ENCODE measurements at regions of chr17 and their contacts with region 1.

Region 1: GRCh38 chr17:31508288-31509094 is 117.0 kb downstream of the RAB11FIP4 start:
- DNase-seq: peak; percentile 55 to 90 (median 86)
- H3K4me3 ChIP-seq: peak overlapping the region; percentile 73
- H3K4me3 Mint-ChIP-seq: peak overlapping the region; percentile 85 to 96 (median 90)
- H3K27ac ChIP-seq: peak overlapping the region; percentile 70
- H3K27ac Mint-ChIP-seq: peak overlapping the region; percentile 92 to 100 (median 98)
- H3K4me1 ChIP-seq: peaks cover 66% of the 10 kb centered on the region
- H3K4me1 Mint-ChIP-seq: peaks cover 61 to 84% (median 76%) of the 10 kb centered on the region in 3 donors
- H3K27me3 ChIP-seq: no peaks in the 10 kb centered on the region
- H3K27me3 Mint-ChIP-seq: no peaks in the 10 kb centered on the region

Region 2: DNA sequence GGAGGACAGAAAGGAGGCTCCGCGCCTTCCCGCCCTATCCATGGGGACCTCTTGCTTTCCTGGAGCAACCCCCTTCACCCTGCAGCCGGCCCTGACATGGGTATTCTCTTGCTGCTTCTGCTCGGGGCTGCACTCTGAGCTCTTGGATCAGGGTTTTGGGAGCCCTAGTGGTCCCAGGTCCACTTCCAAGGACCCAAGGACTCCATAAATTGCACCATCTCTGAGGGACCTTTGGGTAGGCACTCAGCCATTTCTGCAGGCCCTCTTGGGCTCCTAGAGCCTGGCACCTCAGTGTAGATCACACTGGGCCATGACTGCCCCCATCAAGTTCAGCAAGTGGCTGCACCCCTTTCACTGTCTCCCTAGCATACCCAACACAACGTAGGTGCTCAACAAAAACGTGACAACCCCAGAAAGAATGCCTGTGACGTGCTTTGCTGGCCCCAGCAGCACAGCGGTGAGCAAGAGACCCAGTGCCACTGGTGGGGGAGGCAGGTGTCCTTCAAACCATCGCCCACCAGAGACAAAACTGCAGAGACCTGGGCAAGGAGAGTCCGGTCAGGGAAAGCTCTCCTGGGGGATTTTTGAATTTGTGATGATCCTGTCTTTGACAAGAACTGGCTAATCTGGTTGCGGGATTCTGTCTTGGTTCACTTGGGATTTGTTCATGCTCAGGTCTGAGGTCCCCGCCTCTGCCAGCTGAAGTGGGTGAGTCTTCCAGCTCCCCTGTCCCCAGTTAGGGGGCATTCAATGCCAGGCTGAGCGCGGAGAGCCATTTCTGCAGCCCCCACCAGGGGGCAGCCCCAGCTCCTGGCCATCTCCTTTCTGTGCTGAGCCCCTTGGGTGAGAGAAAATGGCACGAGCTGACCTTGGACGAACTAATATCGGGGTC is 119.5 kb before region 1 on chr17:
- CTCF ChIA-PET with region 1: interaction called, 10 read pairs
- POLR2A ChIA-PET with region 1: no interaction called
- DNase-seq: peak in 4 of 5 donors; percentile 17 to 46 (median 24)
- H3K4me3 ChIP-seq: no peak overlapping the region
- H3K4me3 Mint-ChIP-seq: peak overlapping the region in 1 of 7 donors; percentile 28
- H3K27ac ChIP-seq: no peak overlapping the region
- H3K27ac Mint-ChIP-seq: no peak overlapping the region
- H3K4me1 ChIP-seq: no peaks in the 10 kb centered on the region
- H3K4me1 Mint-ChIP-seq: peaks cover 0 to 12% (median 9%) of the 10 kb centered on the region in 3 donors
- H3K27me3 ChIP-seq: peaks cover 24% of the 10 kb centered on the region
- H3K27me3 Mint-ChIP-seq: peaks cover 29 to 34% of the 10 kb centered on the region in 2 donors

Region 3: DNA sequence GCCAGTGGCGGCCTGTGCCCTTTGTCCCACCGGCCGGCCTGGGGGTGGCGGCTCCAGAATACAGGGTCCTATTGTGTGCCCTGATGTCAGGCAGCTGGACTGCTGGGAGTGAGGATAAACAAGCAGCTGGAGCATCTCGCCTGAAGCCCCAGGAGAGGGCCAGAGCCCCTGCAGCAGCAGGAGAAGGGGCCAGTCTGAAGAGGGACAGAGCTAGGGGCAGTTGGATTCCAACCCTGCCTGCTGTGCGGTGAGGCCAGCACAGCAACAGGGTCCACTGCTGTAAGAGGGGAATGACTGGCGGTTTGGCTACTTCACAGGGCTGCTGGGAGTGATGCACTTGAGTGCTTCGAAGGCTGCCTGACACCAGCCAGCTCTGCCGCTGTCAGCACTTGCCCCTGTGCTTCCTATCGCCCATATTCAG is 92.0 kb before region 1 on chr17:
- CTCF ChIA-PET with region 1: no interaction called
- POLR2A ChIA-PET with region 1: no interaction called
- DNase-seq: no peak
- H3K4me3 ChIP-seq: no peak overlapping the region
- H3K4me3 Mint-ChIP-seq: no peak overlapping the region
- H3K27ac ChIP-seq: no peak overlapping the region
- H3K27ac Mint-ChIP-seq: no peak overlapping the region
- H3K4me1 ChIP-seq: no peaks in the 10 kb centered on the region
- H3K4me1 Mint-ChIP-seq: no peaks in the 10 kb centered on the region
- H3K27me3 ChIP-seq: no peaks in the 10 kb centered on the region
- H3K27me3 Mint-ChIP-seq: peaks cover 0 to 7% of the 10 kb centered on the region in 2 donors

Region 4: DNA sequence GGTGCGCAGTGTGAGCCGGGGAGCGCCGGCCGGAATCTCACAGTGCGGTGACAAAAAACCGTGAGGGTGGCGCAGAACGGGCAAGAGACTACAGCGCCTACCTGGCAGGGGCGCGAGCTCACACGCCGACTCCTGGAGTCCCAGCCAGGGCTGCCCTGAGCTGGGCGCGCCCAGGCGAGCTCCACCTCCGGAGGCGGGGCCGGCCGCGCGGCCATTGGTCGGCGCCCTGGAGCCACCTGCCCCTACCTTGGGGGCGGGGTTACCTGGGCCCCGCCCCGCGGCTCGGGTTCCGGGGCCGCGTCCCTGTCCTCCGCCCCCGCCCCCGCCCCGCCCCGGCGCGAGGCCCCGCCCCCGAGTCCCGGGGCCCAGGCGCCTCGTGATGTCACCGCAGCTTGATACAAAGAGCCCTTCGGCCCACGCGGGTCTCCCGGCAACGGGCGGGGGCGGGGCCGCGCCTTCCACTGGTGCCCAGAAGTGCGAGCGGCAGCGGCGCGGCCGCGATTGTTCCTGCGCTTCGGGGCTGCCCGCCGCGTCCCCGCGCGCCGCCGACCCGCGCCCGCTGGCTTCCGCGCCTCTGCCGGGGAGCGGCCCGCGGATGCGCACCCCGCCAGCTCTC is 20.7 kb before region 1 on chr17:
- CTCF ChIA-PET with region 1: interaction called, 48 read pairs
- POLR2A ChIA-PET with region 1: interaction called, 51 read pairs
- DNase-seq: peak; percentile 93 to 98 (median 94)
- H3K4me3 ChIP-seq: peak overlapping the region; percentile 73
- H3K4me3 Mint-ChIP-seq: peak overlapping the region; percentile 87 to 93 (median 91)
- H3K27ac ChIP-seq: peak overlapping the region; percentile 80
- H3K27ac Mint-ChIP-seq: peak overlapping the region; percentile 72 to 99 (median 94)
- H3K4me1 ChIP-seq: peaks cover 46% of the 10 kb centered on the region
- H3K4me1 Mint-ChIP-seq: peaks cover 47 to 50% (median 49%) of the 10 kb centered on the region in 3 donors
- H3K27me3 ChIP-seq: no peaks in the 10 kb centered on the region
- H3K27me3 Mint-ChIP-seq: no peaks in the 10 kb centered on the region

Region 5: GRCh38 chr17:31494259-31495021 is 14.1 kb before region 1 on chr17:
- CTCF ChIA-PET with region 1: interaction called, 48 read pairs
- POLR2A ChIA-PET with region 1: interaction called, 39 read pairs
- DNase-seq: peak; percentile 46 to 83 (median 75)
- H3K4me3 ChIP-seq: peak overlapping the region; percentile 46
- H3K4me3 Mint-ChIP-seq: peak overlapping the region; percentile 54 to 91 (median 79)
- H3K27ac ChIP-seq: peak overlapping the region; percentile 46
- H3K27ac Mint-ChIP-seq: peak overlapping the region; percentile 87 to 99 (median 97)
- H3K4me1 ChIP-seq: peaks cover 87% of the 10 kb centered on the region
- H3K4me1 Mint-ChIP-seq: peaks cover 81 to 100% (median 87%) of the 10 kb centered on the region in 3 donors
- H3K27me3 ChIP-seq: no peaks in the 10 kb centered on the region
- H3K27me3 Mint-ChIP-seq: no peaks in the 10 kb centered on the region

Region 6: GRCh38 chr17:31524926-31525800 is 16.7 kb after region 1 on chr17:
- CTCF ChIA-PET with region 1: interaction called, 19 read pairs
- POLR2A ChIA-PET with region 1: no interaction called
- DNase-seq: peak; percentile 69 to 87 (median 82)
- H3K4me3 ChIP-seq: no peak overlapping the region
- H3K4me3 Mint-ChIP-seq: no peak overlapping the region
- H3K27ac ChIP-seq: no peak overlapping the region
- H3K27ac Mint-ChIP-seq: peak overlapping the region in 2 of 8 donors; percentile 20 to 43
- H3K4me1 ChIP-seq: no peaks in the 10 kb centered on the region
- H3K4me1 Mint-ChIP-seq: no peaks in the 10 kb centered on the region
- H3K27me3 ChIP-seq: no peaks in the 10 kb centered on the region
- H3K27me3 Mint-ChIP-seq: no peaks in the 10 kb centered on the region